Lower leg skin (tissue), 4 donors: ENCODE measurements at regions of chr10 and their contacts with region 1.

Region 1: DNA sequence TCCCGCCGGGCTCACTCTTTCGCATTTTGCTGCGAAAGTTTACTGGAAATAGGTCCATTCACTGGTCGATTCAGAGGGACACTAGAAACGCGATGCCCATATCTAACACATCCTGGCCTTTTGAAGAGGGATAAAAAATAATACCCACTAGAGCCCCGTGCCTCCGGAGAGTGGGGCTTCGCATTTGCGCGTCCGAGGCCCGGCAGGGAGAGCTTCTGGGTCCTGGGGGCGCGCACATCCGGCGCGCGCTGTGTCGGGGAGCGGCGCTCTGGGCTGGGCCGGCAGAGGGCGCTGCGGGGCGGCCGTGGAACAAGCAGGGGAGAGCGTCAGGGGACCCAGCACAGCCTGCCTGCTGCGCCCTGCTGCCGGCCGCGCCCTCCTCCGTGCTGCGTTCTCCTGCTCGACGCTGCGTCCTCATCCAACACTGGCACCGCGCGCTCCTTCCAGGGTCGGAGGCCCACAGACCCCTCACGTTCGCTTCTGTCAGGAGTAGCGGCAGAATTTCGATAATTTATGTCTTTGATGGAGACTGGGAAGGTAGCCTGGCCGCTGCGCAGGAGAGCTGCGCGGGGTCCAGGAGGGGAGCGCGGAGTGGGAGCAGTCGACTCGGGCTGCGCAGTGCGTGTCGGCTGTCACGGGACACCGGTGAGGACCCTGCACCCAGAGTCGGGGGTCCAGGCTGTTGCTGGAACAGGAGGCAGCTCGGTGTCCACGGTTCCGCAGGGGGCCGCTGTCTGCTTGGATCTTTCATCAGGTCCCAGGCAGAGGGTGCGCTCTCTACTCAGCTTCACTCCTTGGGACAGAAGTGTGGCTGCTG is 41.5 kb upstream of the ZNF32 start:
- DNase-seq: peak; percentile 68 to 97
- H3K4me3 ChIP-seq: peak overlapping the region; percentile 24
- CTCF ChIP-seq: no peak
- POLR2A ChIP-seq: no peak

Region 2: DNA sequence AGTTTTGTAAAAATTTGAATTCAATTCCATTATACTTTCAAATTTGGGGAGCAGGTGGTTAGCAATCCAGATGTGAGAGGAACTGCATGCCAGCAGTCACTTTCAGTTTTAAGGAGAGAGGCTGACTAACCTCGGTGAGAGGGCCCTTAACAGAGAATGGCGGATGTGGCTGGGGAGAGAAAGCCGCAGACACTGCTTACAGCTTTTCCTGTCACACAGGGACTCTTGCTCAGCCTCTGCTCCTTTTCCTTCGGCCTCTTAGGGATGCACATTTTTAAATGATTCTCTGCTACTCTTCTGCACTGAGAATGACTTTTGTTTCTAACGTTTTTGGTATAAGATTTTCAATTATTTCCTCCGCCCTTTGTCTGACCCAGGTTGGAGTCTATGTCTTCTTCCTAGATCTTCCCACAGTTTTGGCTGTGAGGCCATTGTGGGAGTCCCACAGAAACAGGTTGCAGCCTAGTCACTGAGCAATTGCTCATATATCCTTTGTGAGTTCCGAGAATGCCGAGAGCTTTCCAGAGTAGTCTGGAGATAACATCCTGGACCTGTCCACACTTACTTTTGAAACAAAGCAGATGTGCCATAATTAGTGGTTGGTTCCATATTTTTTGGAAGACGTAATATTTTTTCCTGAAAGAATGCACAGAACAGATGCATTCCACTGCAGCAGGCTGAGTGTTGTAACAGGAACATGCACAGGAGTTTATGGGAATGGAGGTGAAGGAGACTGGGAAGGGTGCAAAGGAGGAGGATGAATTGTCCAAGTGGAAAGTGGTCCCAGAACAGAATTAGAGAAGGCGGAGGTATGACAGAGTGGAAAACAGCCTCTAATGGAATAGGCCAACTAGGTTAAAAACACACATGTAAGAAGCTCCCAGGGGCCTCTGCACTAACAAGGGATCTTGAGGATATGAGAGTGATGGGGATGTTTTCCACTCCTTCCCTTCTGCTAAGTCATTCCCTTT is 126.5 kb after region 1 on chr10:
- intact Hi-C with region 1: no loop called
- DNase-seq: no peak
- H3K4me3 ChIP-seq: no peak overlapping the region
- CTCF ChIP-seq: no peak
- POLR2A ChIP-seq: no peak

Region 3: DNA sequence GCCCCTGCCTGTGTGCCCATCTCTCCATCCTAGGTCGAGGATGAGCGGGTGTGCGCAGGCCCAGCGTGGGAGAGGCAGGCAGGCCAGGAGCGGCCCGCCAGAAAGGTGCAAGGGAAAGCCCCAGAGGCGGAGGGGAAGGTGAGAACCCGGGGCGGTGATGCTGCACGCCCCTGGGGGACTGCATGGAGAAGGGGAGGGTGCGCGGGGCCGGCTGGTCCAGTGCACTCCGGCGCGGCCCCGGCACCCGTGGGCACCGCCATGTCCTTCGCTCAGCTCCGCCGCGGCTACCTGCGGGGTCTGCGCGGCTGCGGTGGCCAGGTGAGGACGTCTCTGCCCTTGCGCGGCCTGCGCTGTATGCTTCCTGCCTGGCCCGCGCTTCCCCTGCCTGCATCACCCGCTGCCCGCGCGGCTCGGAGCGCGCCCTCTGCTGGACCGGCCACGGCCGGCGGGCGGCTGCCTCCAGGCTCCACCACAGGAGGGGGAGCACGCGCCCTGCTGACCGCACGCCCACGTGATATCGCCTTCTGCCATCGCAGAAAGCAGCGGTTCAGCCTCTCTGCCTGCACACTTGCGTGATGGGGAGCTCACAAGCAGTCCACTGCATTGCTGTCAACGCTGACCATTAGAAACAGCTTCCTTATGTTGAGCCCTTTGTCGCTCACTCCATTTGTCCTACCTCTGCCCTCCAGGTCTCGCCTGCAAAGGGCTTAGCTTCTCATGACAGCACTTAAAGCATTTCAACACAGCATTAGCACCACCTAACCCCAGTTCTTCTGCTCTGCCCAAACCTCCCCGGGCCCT is 620.8 kb after region 1 on chr10:
- intact Hi-C with region 1: loop called (anchors 10 kb)
- DNase-seq: peak; percentile 69 to 96
- H3K4me3 ChIP-seq: no peak overlapping the region
- CTCF ChIP-seq: peak in 1 of 3 donors; percentile 49
- POLR2A ChIP-seq: no peak